ENCODE measurements at regions of chr4 and their contacts with region 1.

Region 1: DNA sequence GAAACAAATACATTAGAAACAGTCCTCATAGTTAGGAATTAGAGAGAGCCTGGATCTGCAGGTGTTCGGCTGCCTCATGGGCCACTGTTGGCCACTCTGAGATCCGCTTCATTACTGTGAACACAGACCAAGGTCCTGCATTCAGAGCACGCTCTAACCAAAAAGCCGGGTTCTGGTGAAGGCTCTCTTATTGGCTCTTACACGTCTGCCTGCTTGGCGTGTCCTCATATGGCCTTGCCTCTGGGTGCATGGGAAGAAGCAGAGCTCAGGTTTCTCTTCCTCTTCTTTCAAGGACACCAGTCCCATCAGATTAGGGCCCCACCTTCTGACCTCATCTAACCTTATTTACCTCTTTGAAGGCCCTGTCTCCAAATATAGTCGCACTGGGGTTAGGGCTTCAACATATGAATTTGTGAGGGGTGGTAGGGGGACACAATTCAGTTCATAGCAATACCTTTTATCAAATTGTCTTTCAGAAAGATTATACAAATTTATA is 37.1 kb upstream of the ELF2 start:
- DNase-seq: peak; percentile 78
- CTCF ChIP-seq: no peak

Region 2: GRCh38 chr4:139367421-139368090 is 153.5 kb after region 1 on chr4:
- CTCF ChIA-PET with region 1: no interaction called
- POLR2A ChIA-PET with region 1: interaction called, 10 read pairs
- DNase-seq: no peak
- CTCF ChIP-seq: no peak

Region 3: GRCh38 chr4:139560406-139561104 is 346.5 kb after region 1 on chr4:
- CTCF ChIA-PET with region 1: no interaction called
- POLR2A ChIA-PET with region 1: no interaction called
- DNase-seq: peak; percentile 24
- CTCF ChIP-seq: no peak

Measured in GM10248 (cell line).